Mucosa of descending colon (tissue), 3 donors: ENCODE measurements at regions of chr9 and their contacts with region 1.

Region 1: DNA sequence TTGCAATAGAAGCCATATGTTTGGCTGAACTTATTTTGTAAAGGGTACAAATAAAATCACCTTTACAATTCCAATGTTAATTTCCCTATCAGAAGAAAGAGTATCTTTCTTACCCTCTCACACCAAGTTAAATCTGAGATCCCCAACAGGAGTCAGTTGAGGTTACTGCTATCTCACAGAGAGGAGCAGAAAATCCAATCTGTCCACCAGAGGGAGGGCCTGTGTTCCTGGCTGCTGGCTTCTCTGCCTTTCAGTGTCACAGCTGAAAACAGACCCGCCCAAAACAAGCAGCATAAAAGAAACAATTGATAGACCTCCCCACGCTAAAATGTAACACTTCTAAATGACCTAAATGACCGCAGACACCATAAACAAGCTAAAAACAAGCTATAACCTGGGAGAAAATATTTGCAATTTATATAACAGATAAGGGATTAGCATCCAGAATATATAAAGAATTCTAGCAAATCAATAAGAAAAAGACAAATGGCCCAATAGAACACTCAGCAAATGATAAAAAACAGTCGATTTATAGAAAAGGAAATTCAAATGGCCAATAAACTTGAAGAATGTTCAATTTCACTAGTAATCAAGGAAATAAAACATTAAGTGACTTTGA is 24.5 kb upstream of the MVB12B start:
- DNase-seq: peak in 2 of 3 donors; percentile 47 to 84
- ATAC-seq: peak; percentile 68
- H3K4me3 ChIP-seq: no peak overlapping the region
- H3K4me1 ChIP-seq: peaks cover 11% of the 10 kb centered on the region
- CTCF ChIP-seq: peak; percentile 40

Region 2: DNA sequence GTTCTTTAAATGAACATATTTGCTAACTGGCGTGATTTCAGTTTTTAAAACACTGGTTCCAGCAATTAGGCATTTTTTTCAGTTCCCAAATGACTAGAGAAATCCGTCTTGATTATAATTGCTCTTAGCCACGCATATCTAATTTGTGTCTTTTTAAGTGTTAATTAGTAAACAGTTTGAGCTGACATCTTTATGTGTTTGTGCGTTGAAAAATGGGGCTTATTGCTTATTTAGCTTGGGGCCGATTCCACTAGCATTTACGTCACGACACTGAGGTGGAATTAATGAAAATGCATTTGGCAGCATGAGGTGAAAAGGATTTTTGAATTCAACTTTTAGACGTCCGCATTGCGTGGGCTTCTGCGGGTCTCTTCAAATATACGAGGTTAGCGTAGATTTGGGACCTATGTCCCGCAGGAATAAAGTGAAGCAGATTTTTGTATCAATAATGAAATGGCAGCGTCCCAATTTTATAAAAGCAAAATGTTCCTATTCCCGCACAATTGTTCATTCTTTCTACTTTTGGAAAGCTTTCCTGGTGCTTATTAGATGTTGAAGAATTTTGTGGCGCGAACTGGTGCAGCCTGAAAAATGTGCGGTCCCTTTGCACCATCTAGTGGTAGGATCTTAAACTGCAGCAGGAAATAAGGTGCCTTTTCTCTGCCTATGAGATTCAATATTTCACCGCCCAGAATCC is 188.9 kb after region 1 on chr9:
- intact Hi-C with region 1: loop called in 1 of 2 experiments (anchors 5 kb)
- DNase-seq: peak in 1 of 3 donors; percentile 80
- ATAC-seq: peak; percentile 82
- H3K4me3 ChIP-seq: no peak overlapping the region
- H3K4me1 ChIP-seq: no peaks in the 10 kb centered on the region
- CTCF ChIP-seq: peak; percentile 77

Region 3: GRCh38 chr9:126558051-126558665 is 256.1 kb after region 1 on chr9:
- intact Hi-C with region 1: no loop called
- DNase-seq: peak in 2 of 3 donors; percentile 72 to 74
- ATAC-seq: peak; percentile 97
- H3K4me3 ChIP-seq: no peak overlapping the region
- H3K4me1 ChIP-seq: no peaks in the 10 kb centered on the region
- CTCF ChIP-seq: peak; percentile 97

Region 4: DNA sequence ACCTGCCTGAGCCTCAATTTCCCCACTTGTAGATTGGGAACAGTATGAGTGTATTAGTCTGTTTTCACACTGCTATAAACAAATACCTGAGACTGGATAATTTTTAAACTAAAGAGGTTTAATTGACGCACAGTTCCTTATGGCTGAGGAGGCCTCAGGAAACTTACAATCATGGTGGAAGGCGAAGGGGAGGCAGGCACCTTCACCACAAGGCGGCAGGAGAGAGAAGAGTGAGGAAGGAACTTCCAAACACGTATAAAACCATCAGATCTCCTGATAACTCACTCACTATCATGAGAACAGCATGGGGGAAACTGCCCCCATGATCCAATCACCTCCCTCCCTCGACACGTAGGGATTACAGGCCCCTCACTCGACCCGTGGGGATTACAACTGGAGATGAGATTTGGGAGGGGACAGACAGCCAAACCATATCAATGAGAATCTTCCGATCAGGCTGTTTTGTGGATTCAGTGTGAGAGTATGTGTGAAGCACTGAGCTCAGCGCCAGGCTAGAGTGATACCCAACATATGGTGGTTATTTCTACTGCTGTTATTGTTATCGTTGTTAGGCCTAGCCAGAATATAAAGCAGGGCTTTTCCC is 297.1 kb after region 1 on chr9:
- intact Hi-C with region 1: no loop called
- DNase-seq: no peak
- ATAC-seq: no peak
- H3K4me3 ChIP-seq: no peak overlapping the region
- H3K4me1 ChIP-seq: no peaks in the 10 kb centered on the region
- CTCF ChIP-seq: no peak